ENCODE measurements at regions of chr9 and their contacts with region 1.

Region 1: DNA sequence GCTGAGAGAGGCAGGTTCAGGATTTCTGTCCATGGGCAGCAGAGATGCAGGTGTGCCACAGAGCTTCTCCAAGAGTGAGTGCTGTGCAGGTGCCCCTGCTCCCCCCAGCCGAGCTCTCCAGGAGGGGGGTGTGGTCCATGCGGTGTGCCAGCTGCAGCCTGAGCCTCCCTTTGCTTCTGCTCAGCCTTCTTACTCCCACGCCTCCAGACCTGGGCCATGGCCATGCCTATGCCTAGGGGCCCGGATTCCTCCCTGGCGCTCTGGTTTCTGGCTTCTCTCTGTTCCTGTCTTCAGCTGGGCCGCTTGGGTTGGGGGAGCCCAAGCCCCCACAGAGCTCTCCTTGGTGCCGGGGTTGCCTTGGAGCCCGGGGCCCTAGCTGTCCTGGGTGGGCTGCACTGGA is 133.3 kb downstream of the CACNA1B start:
- DNase-seq: no peak
- ATAC-seq: no peak
- H3K4me3 Mint-ChIP-seq: no peak overlapping the region
- H3K27ac Mint-ChIP-seq: no peak overlapping the region
- H3K4me1 Mint-ChIP-seq: no peaks in the 10 kb centered on the region
- H3K27me3 Mint-ChIP-seq: no peaks in the 10 kb centered on the region
- CTCF ChIP-seq: no peak

Region 2: GRCh38 chr9:137968235-137968634 is 42.6 kb before region 1 on chr9:
- CTCF ChIA-PET with region 1: no interaction called
- POLR2A ChIA-PET with region 1: no interaction called
- DNase-seq: no peak
- ATAC-seq: peak; percentile 78
- H3K4me3 Mint-ChIP-seq: no peak overlapping the region
- H3K27ac Mint-ChIP-seq: no peak overlapping the region
- H3K4me1 Mint-ChIP-seq: no peaks in the 10 kb centered on the region
- H3K27me3 Mint-ChIP-seq: no peaks in the 10 kb centered on the region
- CTCF ChIP-seq: no peak

Region 3: GRCh38 chr9:138022121-138022741 is 11.4 kb after region 1 on chr9:
- CTCF ChIA-PET with region 1: interaction called, 19 read pairs
- POLR2A ChIA-PET with region 1: no interaction called
- DNase-seq: peak; percentile 79
- ATAC-seq: peak; percentile 81
- H3K4me3 Mint-ChIP-seq: peak overlapping the region; percentile 59; the same call in 1 of the 2 replicates
- H3K27ac Mint-ChIP-seq: no peak overlapping the region
- H3K4me1 Mint-ChIP-seq: peaks cover 4% of the 10 kb centered on the region
- H3K27me3 Mint-ChIP-seq: peaks cover 10% of the 10 kb centered on the region
- CTCF ChIP-seq: peak; percentile 52; the same call in 1 of the 2 replicates

Measured in WTC11 (cell line).